ENCODE measurements at regions of chr2 and their contacts with region 1.

Region 1: GRCh38 chr2:24021193-24021998 is 11.5 kb downstream of the MFSD2B start:
- DNase-seq: peak; percentile 44
- H3K4me3 ChIP-seq: no peak overlapping the region
- H3K27ac ChIP-seq: no peak overlapping the region
- H3K4me1 ChIP-seq: no peaks in the 10 kb centered on the region
- CTCF ChIP-seq: peak; percentile 68

Region 2: DNA sequence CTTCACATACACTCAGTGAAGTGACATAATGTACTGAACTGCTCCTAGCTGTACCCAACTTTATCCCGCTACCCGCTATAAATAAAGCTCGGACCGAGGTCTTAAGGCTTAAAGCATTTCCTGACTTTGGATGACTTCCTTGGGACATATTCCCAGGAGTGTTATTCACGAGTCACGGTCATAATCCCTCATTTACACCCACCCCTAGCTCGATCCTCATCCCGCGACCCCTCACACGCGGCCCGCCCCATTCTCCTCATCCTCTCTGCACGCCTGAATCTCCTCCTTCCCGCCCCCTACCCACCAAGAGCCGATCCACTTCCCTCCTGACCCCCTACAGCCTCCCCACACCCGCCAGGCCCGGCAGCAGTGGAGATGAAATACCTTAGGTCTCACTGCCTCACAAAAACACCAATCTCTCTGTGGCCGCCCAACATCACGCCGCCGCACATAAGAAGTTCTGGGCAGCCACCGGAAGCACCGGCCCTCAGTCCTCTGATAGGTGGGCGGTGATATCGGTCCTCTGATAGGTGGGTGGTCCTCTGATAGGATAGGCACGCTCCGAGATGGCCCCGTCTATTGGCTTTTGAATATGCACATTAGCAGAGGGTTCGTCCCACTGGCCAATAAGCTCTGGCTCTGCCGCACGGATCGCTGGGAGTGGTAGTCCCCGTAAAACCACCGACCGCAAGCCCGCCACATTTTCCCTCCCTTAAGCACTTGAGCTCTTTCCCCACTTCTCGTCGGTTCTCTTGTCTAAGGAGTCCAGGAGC is 25.7 kb after region 1 on chr2 and contains the start of gene WDCP:
- CTCF ChIA-PET with region 1: interaction called, 15 read pairs
- POLR2A ChIA-PET with region 1: no interaction called
- intact Hi-C with region 1: no loop called
- DNase-seq: peak; percentile 98
- H3K4me3 ChIP-seq: peak within 1 kb of the TSS; percentile 85
- H3K27ac ChIP-seq: peak within 1 kb of the TSS; percentile 25
- H3K4me1 ChIP-seq: peaks cover 24% of the 10 kb centered on the region
- CTCF ChIP-seq: no peak
- total RNA-seq, gene WDCP: 10.9 and 13.9 TPM in 2 replicates

Region 3: DNA sequence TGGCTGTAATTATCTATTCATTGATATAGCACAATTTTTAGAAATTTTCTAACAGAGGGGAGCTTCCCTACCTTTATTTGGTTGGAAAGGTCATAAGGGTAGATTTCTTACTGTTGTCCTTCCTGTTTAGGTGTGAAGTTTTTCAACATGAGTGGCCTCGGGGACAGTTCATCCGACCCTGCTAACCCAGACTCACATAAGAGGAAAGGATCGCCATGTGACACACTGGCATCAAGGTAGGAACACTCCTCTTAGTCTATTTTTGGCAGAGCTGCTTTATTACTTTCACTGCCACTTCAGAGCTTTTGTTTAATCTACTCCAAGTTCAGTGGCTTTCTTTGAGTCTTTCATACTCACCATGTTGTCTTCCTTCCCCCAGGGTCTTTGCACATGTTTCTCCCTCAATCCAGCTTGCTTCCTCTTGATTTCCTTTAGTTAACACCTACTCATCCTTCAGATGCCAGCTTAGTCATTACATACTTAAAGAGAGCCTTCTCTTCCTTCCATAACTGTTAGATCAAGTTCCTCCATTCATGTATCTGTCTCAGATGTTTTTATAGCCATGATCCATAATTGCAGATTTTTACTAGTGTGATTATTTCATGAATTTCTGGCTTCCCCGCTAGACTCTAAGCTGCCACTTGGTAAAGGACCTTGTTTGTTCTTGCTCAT is 637.3 kb after region 1 on chr2:
- CTCF ChIA-PET with region 1: no interaction called
- POLR2A ChIA-PET with region 1: no interaction called
- intact Hi-C with region 1: no loop called
- DNase-seq: no peak
- H3K4me3 ChIP-seq: no peak overlapping the region
- H3K27ac ChIP-seq: no peak overlapping the region
- H3K4me1 ChIP-seq: no peaks in the 10 kb centered on the region
- CTCF ChIP-seq: no peak

Region 4: DNA sequence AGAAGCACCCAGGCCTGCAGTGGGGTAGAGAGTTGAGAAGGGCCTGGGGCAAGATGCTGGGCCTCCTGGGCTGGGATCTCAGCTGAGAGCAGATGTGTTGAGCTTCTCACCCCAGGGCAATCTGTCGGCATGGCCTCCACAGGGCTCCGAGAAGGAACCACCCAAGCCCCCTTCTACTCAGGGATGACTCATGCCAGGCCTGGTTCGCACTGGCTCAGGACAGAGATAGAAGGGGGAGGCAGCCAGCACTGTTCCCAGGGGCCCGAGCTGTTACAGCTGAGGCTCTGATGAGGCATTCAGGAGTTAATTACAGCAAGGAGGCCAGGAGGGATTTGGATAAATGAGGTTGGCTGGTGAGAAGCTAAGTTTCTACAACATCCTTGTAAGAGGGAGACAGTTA is 834.3 kb after region 1 on chr2:
- CTCF ChIA-PET with region 1: no interaction called
- POLR2A ChIA-PET with region 1: no interaction called
- intact Hi-C with region 1: no loop called
- DNase-seq: no peak
- H3K4me3 ChIP-seq: no peak overlapping the region
- H3K27ac ChIP-seq: no peak overlapping the region
- H3K4me1 ChIP-seq: no peaks in the 10 kb centered on the region
- CTCF ChIP-seq: no peak

Measured in OCI-LY7 (cell line).